Spleen (tissue), 13 donors: ENCODE measurements at regions of chr15 and their contacts with region 1.

Region 1: GRCh38 chr15:43903864-43904290 is 77.1 kb downstream of the WDR76 start:
- DNase-seq: no peak
- H3K4me3 ChIP-seq: no peak overlapping the region
- H3K27ac ChIP-seq: no peak overlapping the region
- H3K4me1 ChIP-seq: peaks cover 0 to 9% (median 3%) of the 10 kb centered on the region in 6 donors
- H3K27me3 ChIP-seq: no peaks in the 10 kb centered on the region
- CTCF ChIP-seq: peak; percentile 38 to 81 (median 72)
- POLR2A ChIP-seq: no peak

Region 2: DNA sequence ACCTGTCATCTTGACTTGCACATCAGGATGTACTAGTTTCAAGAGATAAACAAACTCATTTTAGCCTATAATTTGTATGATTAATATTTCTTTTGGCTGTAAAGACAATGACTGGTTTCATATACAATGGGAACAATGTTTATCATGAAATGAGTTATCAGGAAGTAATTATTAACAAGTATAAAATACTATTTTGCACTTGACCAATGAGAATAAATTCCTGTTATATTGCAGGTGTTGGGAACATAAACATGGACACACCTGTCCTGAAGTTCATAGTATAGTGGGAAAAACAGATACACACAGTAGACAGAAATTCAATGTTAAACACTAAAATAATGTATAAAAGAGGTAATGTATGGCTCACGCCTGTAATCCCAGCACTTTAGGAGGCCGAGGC is 854.9 kb before region 1 on chr15:
- intact Hi-C with region 1: no loop called
- DNase-seq: no peak
- H3K4me3 ChIP-seq: no peak overlapping the region
- H3K27ac ChIP-seq: no peak overlapping the region
- H3K4me1 ChIP-seq: no peaks in the 10 kb centered on the region
- H3K27me3 ChIP-seq: no peaks in the 10 kb centered on the region
- CTCF ChIP-seq: no peak
- POLR2A ChIP-seq: no peak

Region 3: GRCh38 chr15:43776718-43777583 is 126.9 kb before region 1 on chr15 and contains the start of gene ELL3:
- intact Hi-C with region 1: no loop called
- DNase-seq: peak; percentile 95
- H3K4me3 ChIP-seq: peak within 1 kb of the TSS; percentile 47 to 80 (median 66)
- H3K27ac ChIP-seq: peak within 1 kb of the TSS; percentile 83 to 91 (median 86)
- H3K4me1 ChIP-seq: peaks cover 8 to 38% (median 25%) of the 10 kb centered on the region in 6 donors
- H3K27me3 ChIP-seq: no peaks in the 10 kb centered on the region
- CTCF ChIP-seq: peak in 10 of 11 experiments; percentile 50 to 81 (median 78)
- POLR2A ChIP-seq: no peak
- total RNA-seq, gene ELL3: 1.7 to 9.8 (median 3.0) TPM

Region 4: DNA sequence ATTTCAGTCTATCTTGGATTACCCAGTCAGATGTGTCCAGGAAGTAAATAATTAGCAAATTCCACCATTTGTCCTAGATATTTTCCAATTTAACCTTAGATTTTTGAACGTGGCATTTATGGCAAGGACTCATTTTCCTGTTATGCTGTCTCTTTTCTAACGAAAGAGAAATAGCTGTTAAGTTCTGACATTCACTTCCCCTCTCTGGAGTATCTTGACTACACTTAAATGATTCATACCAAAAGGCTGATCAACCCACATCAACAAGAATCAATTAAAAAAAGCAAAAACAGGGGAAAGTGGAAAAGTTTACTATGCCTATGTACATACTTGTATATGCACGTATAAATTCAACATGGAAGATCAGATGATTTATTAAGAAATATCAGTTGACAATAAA is 141.3 kb after region 1 on chr15:
- intact Hi-C with region 1: no loop called
- DNase-seq: no peak
- H3K4me3 ChIP-seq: no peak overlapping the region
- H3K27ac ChIP-seq: no peak overlapping the region
- H3K4me1 ChIP-seq: no peaks in the 10 kb centered on the region
- H3K27me3 ChIP-seq: peaks cover 0 to 3% (median 0%) of the 10 kb centered on the region in 7 donors
- CTCF ChIP-seq: no peak
- POLR2A ChIP-seq: no peak

Region 5: DNA sequence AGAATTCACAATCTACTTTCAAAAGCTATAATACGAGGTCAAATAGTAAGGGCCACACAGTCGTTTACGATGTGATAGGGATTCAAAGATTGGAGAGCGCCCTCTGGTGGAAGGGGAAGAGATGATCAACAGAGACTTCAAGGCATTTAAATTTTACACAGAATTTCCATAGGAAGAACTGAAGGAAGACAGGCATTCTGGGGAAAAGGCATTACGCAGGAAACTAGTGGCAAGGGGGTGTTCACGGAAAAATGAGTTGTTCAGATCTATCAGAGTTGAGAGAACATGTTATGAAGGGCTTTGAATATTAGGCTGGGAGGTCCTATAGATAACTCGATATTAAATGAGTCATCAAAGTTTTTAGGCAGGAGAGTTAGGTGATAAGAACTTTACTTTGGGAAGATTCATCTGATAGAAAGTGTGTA is 162.5 kb after region 1 on chr15:
- intact Hi-C with region 1: loop called (anchors 5 kb)
- DNase-seq: no peak
- H3K4me3 ChIP-seq: no peak overlapping the region
- H3K27ac ChIP-seq: no peak overlapping the region
- H3K4me1 ChIP-seq: no peaks in the 10 kb centered on the region
- H3K27me3 ChIP-seq: no peaks in the 10 kb centered on the region
- CTCF ChIP-seq: peak in 10 of 11 experiments; percentile 27 to 75 (median 65)
- POLR2A ChIP-seq: no peak

Region 6: DNA sequence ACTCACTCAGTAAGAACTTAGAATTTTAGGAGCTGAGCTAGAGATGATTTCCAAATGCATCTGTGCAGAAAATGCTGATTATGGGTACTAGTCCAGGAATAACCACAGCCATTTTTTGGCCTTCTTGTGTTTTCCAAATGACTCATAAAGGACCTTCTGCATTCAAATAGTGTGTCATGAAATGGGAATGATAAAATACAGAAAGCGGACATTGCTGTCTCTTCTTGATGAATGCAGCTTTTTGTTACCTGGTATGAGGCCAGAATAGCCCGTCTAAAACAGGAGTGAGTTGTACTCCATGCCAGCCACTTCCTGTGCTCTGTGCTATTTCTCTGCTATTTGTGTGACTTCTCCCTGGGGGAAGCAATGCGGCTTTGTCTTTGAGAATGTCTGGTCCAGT is 311.7 kb after region 1 on chr15:
- intact Hi-C with region 1: loop called (anchors 10 kb)
- DNase-seq: no peak
- H3K4me3 ChIP-seq: no peak overlapping the region
- H3K27ac ChIP-seq: no peak overlapping the region
- H3K4me1 ChIP-seq: peaks cover 0 to 7% (median 0%) of the 10 kb centered on the region in 6 donors
- H3K27me3 ChIP-seq: peaks cover 0 to 41% (median 0%) of the 10 kb centered on the region in 7 donors
- CTCF ChIP-seq: no peak
- POLR2A ChIP-seq: no peak